Ascending aorta (tissue), 2 donors: ENCODE measurements at regions of chr4 and their contacts with region 1.

Region 1: DNA sequence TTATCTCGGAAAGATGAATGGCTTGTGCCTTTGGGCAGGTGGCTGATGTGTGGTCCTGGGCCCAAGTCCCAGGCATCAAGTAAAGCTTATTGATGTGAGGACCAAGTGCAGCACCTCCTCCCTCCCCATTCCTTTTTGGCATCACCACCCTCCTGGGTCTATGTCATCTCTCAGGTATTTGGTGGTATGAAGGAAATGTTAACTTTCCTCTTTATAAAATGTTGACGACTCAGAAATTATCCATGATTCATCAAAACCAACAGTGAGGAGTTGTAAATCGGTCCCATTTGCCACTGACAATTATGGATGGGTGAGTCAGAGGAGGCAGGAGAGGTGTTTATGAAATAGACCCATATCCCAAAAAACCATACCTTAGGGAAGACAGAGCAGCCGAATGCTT is 229.4 kb upstream of the GATB start:
- DNase-seq: peak in 1 of 2 donors; percentile 50
- H3K4me3 ChIP-seq: no peak overlapping the region
- H3K27ac ChIP-seq: no peak overlapping the region
- H3K4me1 ChIP-seq: peaks cover 0 to 4% of the 10 kb centered on the region in 2 donors
- H3K27me3 ChIP-seq: no peaks in the 10 kb centered on the region
- CTCF ChIP-seq: no peak

Region 2: GRCh38 chr4:152039023-152039481 is 48.9 kb after region 1 on chr4:
- intact Hi-C with region 1: loop called (anchors 5 kb)
- DNase-seq: no peak
- H3K4me3 ChIP-seq: no peak overlapping the region
- H3K27ac ChIP-seq: peak overlapping the region; percentile 12 to 21
- H3K4me1 ChIP-seq: peaks cover 0 to 9% of the 10 kb centered on the region in 2 donors
- H3K27me3 ChIP-seq: no peaks in the 10 kb centered on the region
- CTCF ChIP-seq: no peak